ENCODE measurements at regions of chr3 and their contacts with region 1.

Region 1: GRCh38 chr3:57007513-57008460 is 52.7 kb upstream of the SPATA12 start:
- DNase-seq: peak; percentile 88 to 92
- ATAC-seq: peak; percentile 91
- H3K4me3 ChIP-seq: no peak overlapping the region
- H3K27ac ChIP-seq: peak overlapping the region; percentile 58 to 85
- H3K4me1 ChIP-seq: peaks cover 0 to 2% of the 10 kb centered on the region in 2 donors
- H3K27me3 ChIP-seq: no peaks in the 10 kb centered on the region

Region 2: GRCh38 chr3:56988458-56989168 is 19.2 kb before region 1 on chr3:
- intact Hi-C with region 1: loop called in 1 of 2 experiments (anchors 1 kb)
- DNase-seq: peak; percentile 85 to 89
- ATAC-seq: peak; percentile 88
- H3K4me3 ChIP-seq: no peak overlapping the region
- H3K27ac ChIP-seq: no peak overlapping the region
- H3K4me1 ChIP-seq: no peaks in the 10 kb centered on the region
- H3K27me3 ChIP-seq: no peaks in the 10 kb centered on the region

Region 3: GRCh38 chr3:57060089-57060829 is 52.5 kb after region 1 on chr3 and contains the start of gene SPATA12:
- intact Hi-C with region 1: loop called in 1 of 2 experiments (anchors 5 kb)
- DNase-seq: peak; percentile 83 to 87
- ATAC-seq: peak; percentile 91
- H3K4me3 ChIP-seq: no peak within 1 kb of the TSS
- H3K27ac ChIP-seq: no peak within 1 kb of the TSS
- H3K4me1 ChIP-seq: no peaks in the 10 kb centered on the region
- H3K27me3 ChIP-seq: no peaks in the 10 kb centered on the region
- total RNA-seq, gene SPATA12: not detected

Region 4: GRCh38 chr3:57078344-57078634 is 70.5 kb after region 1 on chr3:
- intact Hi-C with region 1: loop called in 1 of 2 experiments (anchors 5 kb)
- DNase-seq: peak; percentile 76 to 83
- ATAC-seq: peak; percentile 43
- H3K4me3 ChIP-seq: peak overlapping the region; percentile 20 to 57
- H3K27ac ChIP-seq: no peak overlapping the region
- H3K4me1 ChIP-seq: no peaks in the 10 kb centered on the region
- H3K27me3 ChIP-seq: no peaks in the 10 kb centered on the region